Naive thymus-derived CD4-positive, alpha-beta T cell (primary cell): ENCODE measurements at regions of chr10 and their contacts with region 1.

Region 1: GRCh38 chr10:102917962-102918816 is at the start of gene CNNM2:
- DNase-seq: peak; percentile 95 to 100 (median 99)
- ATAC-seq: peak; percentile 95
- H3K4me3 ChIP-seq: peak within 1 kb of the TSS; percentile 98
- H3K4me3 Mint-ChIP-seq: peak within 1 kb of the TSS; percentile 94 to 99 (median 96)
- H3K27ac ChIP-seq: peak within 1 kb of the TSS; percentile 83
- H3K27ac Mint-ChIP-seq: peak within 1 kb of the TSS; percentile 82 to 97 (median 94)
- H3K4me1 ChIP-seq: peaks cover 34 to 35% of the 10 kb centered on the region in 2 donors
- H3K4me1 Mint-ChIP-seq: peaks cover 41 to 68% (median 56%) of the 10 kb centered on the region in 7 donors
- H3K27me3 ChIP-seq: no peaks in the 10 kb centered on the region
- H3K27me3 Mint-ChIP-seq: peaks cover 0 to 14% (median 5%) of the 10 kb centered on the region in 5 donors
- total RNA-seq, gene CNNM2: 9.3 to 17.5 (median 12.0) TPM

Region 2: GRCh38 chr10:101060036-101060950 is 1857.9 kb before region 1 on chr10:
- CTCF ChIA-PET with region 1: no interaction called
- POLR2A ChIA-PET with region 1: no interaction called
- intact Hi-C with region 1: loop called in 1 of 2 experiments (anchors 5 kb)
- DNase-seq: peak; percentile 70 to 97 (median 94)
- ATAC-seq: peak; percentile 82
- H3K4me3 ChIP-seq: peak overlapping the region; percentile 96
- H3K4me3 Mint-ChIP-seq: peak overlapping the region; percentile 90 to 99 (median 96)
- H3K27ac ChIP-seq: peak overlapping the region; percentile 96
- H3K27ac Mint-ChIP-seq: peak overlapping the region; percentile 86 to 98 (median 93)
- H3K4me1 ChIP-seq: peaks cover 12 to 21% of the 10 kb centered on the region in 2 donors
- H3K4me1 Mint-ChIP-seq: peaks cover 16 to 61% (median 31%) of the 10 kb centered on the region in 7 donors
- H3K27me3 ChIP-seq: peaks cover 5 to 18% of the 10 kb centered on the region in 2 donors
- H3K27me3 Mint-ChIP-seq: peaks cover 15 to 23% (median 18%) of the 10 kb centered on the region in 5 donors

Region 3: GRCh38 chr10:102835007-102835482 is 83.1 kb before region 1 on chr10:
- CTCF ChIA-PET with region 1: interaction called, 6 read pairs
- POLR2A ChIA-PET with region 1: no interaction called
- intact Hi-C with region 1: loop called (anchors 1 to 5 kb)
- DNase-seq: peak; percentile 44 to 77 (median 66)
- ATAC-seq: peak; percentile 95
- H3K4me3 ChIP-seq: no peak overlapping the region
- H3K4me3 Mint-ChIP-seq: no peak overlapping the region
- H3K27ac ChIP-seq: no peak overlapping the region
- H3K27ac Mint-ChIP-seq: no peak overlapping the region
- H3K4me1 ChIP-seq: no peaks in the 10 kb centered on the region
- H3K4me1 Mint-ChIP-seq: peaks cover 0 to 1% (median 0%) of the 10 kb centered on the region in 7 donors
- H3K27me3 ChIP-seq: no peaks in the 10 kb centered on the region
- H3K27me3 Mint-ChIP-seq: peaks cover 0 to 9% (median 6%) of the 10 kb centered on the region in 5 donors

Region 4: GRCh38 chr10:103069453-103070331 is 151.5 kb after region 1 on chr10:
- CTCF ChIA-PET with region 1: interaction called, 27 read pairs
- POLR2A ChIA-PET with region 1: interaction called, 4 read pairs
- intact Hi-C with region 1: loop called (anchors 1 kb)
- DNase-seq: peak; percentile 48 to 75 (median 68)
- ATAC-seq: peak; percentile 89
- H3K4me3 ChIP-seq: no peak overlapping the region
- H3K4me3 Mint-ChIP-seq: peak overlapping the region in 3 of 10 donors; percentile 21 to 61 (median 33)
- H3K27ac ChIP-seq: no peak overlapping the region
- H3K27ac Mint-ChIP-seq: peak overlapping the region in 6 of 9 donors; percentile 16 to 75 (median 62)
- H3K4me1 ChIP-seq: no peaks in the 10 kb centered on the region
- H3K4me1 Mint-ChIP-seq: peaks cover 16 to 35% (median 23%) of the 10 kb centered on the region in 7 donors
- H3K27me3 ChIP-seq: no peaks in the 10 kb centered on the region
- H3K27me3 Mint-ChIP-seq: no peaks in the 10 kb centered on the region

Region 5: GRCh38 chr10:103333925-103334520 is 415.8 kb after region 1 on chr10:
- CTCF ChIA-PET with region 1: interaction called, 4 read pairs
- POLR2A ChIA-PET with region 1: interaction called, 3 read pairs
- intact Hi-C with region 1: loop called (anchors 1 to 5 kb)
- DNase-seq: peak in 5 of 9 donors; percentile 4 to 35 (median 18)
- ATAC-seq: no peak
- H3K4me3 ChIP-seq: no peak overlapping the region
- H3K4me3 Mint-ChIP-seq: no peak overlapping the region
- H3K27ac ChIP-seq: no peak overlapping the region
- H3K27ac Mint-ChIP-seq: no peak overlapping the region
- H3K4me1 ChIP-seq: no peaks in the 10 kb centered on the region
- H3K4me1 Mint-ChIP-seq: no peaks in the 10 kb centered on the region
- H3K27me3 ChIP-seq: no peaks in the 10 kb centered on the region
- H3K27me3 Mint-ChIP-seq: no peaks in the 10 kb centered on the region

Region 6: GRCh38 chr10:103396064-103396788 is 478.0 kb after region 1 on chr10 and contains the starts of genes ATP5MK and PDCD11:
- CTCF ChIA-PET with region 1: no interaction called
- POLR2A ChIA-PET with region 1: interaction called, 4 read pairs
- intact Hi-C with region 1: loop called (anchors 1 kb)
- DNase-seq: peak; percentile 75 to 93 (median 91)
- ATAC-seq: peak; percentile 100
- H3K4me3 ChIP-seq: peak within 1 kb of the TSS; percentile 91
- H3K4me3 Mint-ChIP-seq: peak within 1 kb of the TSS; percentile 91 to 99 (median 99)
- H3K27ac ChIP-seq: peak within 1 kb of the TSS; percentile 87
- H3K27ac Mint-ChIP-seq: peak within 1 kb of the TSS; percentile 89 to 97 (median 96)
- H3K4me1 ChIP-seq: peaks cover 25 to 33% of the 10 kb centered on the region in 2 donors
- H3K4me1 Mint-ChIP-seq: peaks cover 42 to 68% (median 62%) of the 10 kb centered on the region in 7 donors
- H3K27me3 ChIP-seq: no peaks in the 10 kb centered on the region
- H3K27me3 Mint-ChIP-seq: no peaks in the 10 kb centered on the region
- total RNA-seq, gene ATP5MK: 106 to 334 (median 120) TPM
- total RNA-seq, gene PDCD11: 28.8 to 56.3 (median 38.8) TPM

Region 7: DNA sequence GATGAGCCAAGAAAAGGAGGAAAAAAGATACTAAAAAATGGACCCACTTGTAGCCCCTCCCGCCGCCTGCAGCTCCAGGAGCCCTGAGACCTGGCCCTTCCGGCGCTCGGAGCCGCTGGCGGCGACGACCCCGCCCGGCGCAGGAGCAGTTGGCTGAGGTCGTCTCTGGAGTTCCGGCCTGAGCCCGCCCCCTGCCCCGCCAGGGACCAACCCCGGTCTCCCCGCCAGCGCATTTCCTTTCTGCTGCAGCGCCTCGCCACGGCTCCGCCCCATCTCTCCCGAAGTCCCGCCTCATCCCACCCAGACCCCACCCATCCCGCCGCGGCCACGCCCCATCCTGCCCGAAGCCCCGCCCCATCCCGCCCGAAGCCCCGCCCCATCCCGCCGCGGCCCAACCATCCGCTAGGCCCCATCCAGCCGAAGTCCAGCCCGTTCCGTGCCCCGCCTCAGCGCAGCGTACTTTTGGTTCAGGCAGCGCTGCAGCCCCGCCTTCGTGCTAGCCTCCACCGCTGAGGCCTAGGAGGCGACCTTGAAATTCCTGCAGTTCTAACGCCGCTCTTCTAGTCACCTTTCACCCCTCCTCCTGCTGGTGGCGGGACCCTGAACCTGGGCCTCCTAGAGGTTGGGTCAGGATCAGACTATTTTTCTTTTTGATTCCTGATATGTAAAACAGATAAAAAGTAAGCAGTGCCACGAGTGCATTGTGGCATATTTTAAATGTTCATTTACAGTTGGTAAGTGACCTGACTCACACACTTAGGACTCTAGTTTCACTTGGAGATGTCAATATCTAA is 1000.1 kb after region 1 on chr10 and contains the start of gene STN1:
- CTCF ChIA-PET with region 1: no interaction called
- POLR2A ChIA-PET with region 1: no interaction called
- intact Hi-C with region 1: loop called in 1 of 2 experiments (anchors 5 kb)
- DNase-seq: peak; percentile 81 to 95 (median 94)
- ATAC-seq: peak; percentile 97
- H3K4me3 ChIP-seq: peak within 1 kb of the TSS; percentile 89
- H3K4me3 Mint-ChIP-seq: peak within 1 kb of the TSS; percentile 88 to 99 (median 97)
- H3K27ac ChIP-seq: peak within 1 kb of the TSS; percentile 79
- H3K27ac Mint-ChIP-seq: peak within 1 kb of the TSS; percentile 95 to 99 (median 97)
- H3K4me1 ChIP-seq: peaks cover 28 to 31% of the 10 kb centered on the region in 2 donors
- H3K4me1 Mint-ChIP-seq: peaks cover 15 to 44% (median 38%) of the 10 kb centered on the region in 7 donors
- H3K27me3 ChIP-seq: no peaks in the 10 kb centered on the region
- H3K27me3 Mint-ChIP-seq: no peaks in the 10 kb centered on the region
- total RNA-seq, gene STN1: 28.8 to 42.6 (median 34.8) TPM